Panc1 (cell line): ENCODE measurements at regions of chr9 and their contacts with region 1.

Region 1: DNA sequence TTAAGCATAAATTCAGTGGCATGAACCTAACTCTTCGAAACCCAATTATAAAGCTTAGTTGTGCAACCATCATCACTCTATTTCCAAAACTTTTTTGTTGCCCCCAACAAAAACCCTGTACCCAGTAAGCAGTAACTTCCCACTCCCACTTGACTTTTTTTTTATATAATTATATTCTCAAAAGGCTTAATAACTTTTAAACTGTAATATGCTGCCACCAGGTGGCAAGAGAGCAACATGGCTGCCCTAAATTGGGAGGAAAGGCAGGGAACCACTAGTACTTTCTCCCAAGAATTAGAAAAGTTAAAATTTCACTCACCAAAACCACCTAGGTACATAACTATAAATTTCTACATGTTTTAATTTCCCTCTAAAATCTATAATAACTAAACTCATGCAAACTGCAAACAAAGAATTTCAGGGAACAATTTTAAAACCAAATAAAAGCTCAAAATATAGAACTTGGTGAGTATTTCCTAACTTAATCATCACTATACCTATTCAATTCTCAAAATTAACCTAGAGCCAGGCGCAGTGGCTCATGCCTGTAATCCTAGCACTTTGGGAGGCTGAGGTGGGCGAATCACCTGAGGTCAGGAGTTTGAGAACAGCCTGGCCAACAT is 50.2 kb upstream of the RNF38 start:
- DNase-seq: peak; percentile 20
- ATAC-seq: peak; percentile 60; the same call in 1 of the 2 replicates
- H3K4me3 ChIP-seq: no peak overlapping the region
- H3K27ac ChIP-seq: no peak overlapping the region
- H3K4me1 ChIP-seq: no peaks in the 10 kb centered on the region
- H3K27me3 ChIP-seq: no peaks in the 10 kb centered on the region
- CTCF ChIP-seq: no peak

Region 2: DNA sequence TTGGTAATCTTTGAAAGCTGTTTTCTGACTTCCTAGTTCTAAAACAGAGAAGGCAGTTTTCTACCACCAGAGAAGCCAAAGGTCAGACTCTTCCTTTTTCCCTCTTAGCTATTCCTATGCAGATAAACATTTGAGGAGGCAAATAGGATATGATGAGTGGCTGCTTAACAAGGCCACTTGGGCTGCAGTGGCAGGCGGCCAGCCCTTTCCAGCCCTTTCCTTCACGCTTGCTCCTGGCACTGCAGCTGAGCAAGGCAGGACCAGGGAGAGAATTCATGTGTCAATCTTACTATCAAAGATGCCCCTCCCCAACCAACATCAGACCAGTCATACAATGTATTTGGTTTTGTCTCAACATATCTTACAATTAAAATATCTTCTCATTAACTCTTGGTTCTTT is 13.3 kb before region 1 on chr9:
- CTCF ChIA-PET with region 1: interaction called, 3 read pairs
- POLR2A ChIA-PET with region 1: interaction called, 15 read pairs
- in situ Hi-C with region 1: no loop called
- intact Hi-C with region 1: no loop called
- DNase-seq: no peak
- ATAC-seq: no peak
- H3K4me3 ChIP-seq: no peak overlapping the region
- H3K27ac ChIP-seq: no peak overlapping the region
- H3K4me1 ChIP-seq: no peaks in the 10 kb centered on the region
- H3K27me3 ChIP-seq: no peaks in the 10 kb centered on the region
- CTCF ChIP-seq: no peak